Posterior vena cava (tissue), 2 donors: ENCODE measurements at regions of chr5 and their contacts with region 1.

Region 1: GRCh38 chr5:90689064-90689463 is 130.5 kb downstream of the ADGRV1 start:
- DNase-seq: no peak

Region 2: GRCh38 chr5:89168766-89169165 is 1520.3 kb before region 1 on chr5:
- intact Hi-C with region 1: loop called in 1 of 2 experiments (anchors 10 kb)
- DNase-seq: no peak

Region 3: GRCh38 chr5:90675222-90675621 is 13.8 kb before region 1 on chr5:
- intact Hi-C with region 1: no loop called
- DNase-seq: no peak